CD4-positive, alpha-beta T cell (primary cell): ENCODE measurements at regions of chr17 and their contacts with region 1.

Region 1: DNA sequence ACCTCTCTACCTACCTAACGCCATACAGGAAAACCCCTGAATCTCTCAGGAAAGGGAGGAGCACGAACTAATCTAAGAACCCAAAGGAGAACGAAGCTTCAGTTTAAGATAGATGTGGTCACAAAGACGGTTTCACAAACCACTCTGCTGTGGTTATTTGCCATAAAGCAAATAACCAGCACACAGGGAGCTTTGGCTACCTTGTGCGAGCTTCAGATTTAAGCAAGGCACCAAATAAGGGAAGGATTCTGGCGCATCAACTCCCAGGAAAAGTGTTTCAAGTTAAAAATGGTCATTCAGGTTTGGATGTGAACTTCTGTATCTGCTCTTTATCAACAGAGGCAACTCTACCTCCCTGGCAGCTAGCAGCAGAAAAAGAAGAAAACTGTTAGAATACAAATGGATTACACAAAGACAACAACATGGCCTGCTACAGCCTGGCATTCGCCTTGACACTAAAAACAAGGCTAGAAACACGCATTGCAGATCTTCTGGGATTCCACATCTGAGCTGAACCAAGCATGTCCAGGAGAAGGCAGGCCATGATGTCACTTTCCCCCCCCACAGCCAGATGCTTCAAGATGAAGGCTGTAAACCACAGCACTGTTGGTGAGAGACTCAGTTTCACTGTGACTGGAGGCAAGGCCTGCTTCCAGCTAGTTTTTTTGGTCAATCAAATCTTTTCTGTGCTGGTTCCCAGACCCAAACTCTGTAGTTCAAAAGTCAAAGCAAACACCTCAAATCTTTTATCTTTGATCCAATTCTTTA is 43.6 kb downstream of the SMG6 start:
- DNase-seq: peak; percentile 17 to 84 (median 46)
- ATAC-seq: peak; percentile 55
- H3K4me3 ChIP-seq: peak overlapping the region; percentile 12
- H3K4me3 Mint-ChIP-seq: peak overlapping the region; percentile 85
- H3K27ac ChIP-seq: peak overlapping the region; percentile 63 to 76
- H3K27ac Mint-ChIP-seq: peak overlapping the region; percentile 98
- H3K4me1 ChIP-seq: peaks cover 68% of the 10 kb centered on the region
- H3K4me1 Mint-ChIP-seq: peaks cover 75% of the 10 kb centered on the region
- H3K27me3 ChIP-seq: no peaks in the 10 kb centered on the region
- H3K27me3 Mint-ChIP-seq: no peaks in the 10 kb centered on the region
- CTCF ChIP-seq: no peak

Region 2: GRCh38 chr17:2215616-2216364 is 44.2 kb before region 1 on chr17:
- CTCF ChIA-PET with region 1: no interaction called
- POLR2A ChIA-PET with region 1: interaction called, 12 read pairs
- intact Hi-C with region 1: no loop called
- DNase-seq: peak; percentile 54 to 88 (median 64)
- ATAC-seq: peak; percentile 93
- H3K4me3 ChIP-seq: peak overlapping the region; percentile 37
- H3K4me3 Mint-ChIP-seq: peak overlapping the region; percentile 68
- H3K27ac ChIP-seq: peak overlapping the region; percentile 81 to 83
- H3K27ac Mint-ChIP-seq: peak overlapping the region; percentile 95
- H3K4me1 ChIP-seq: peaks cover 44% of the 10 kb centered on the region
- H3K4me1 Mint-ChIP-seq: peaks cover 58% of the 10 kb centered on the region
- H3K27me3 ChIP-seq: no peaks in the 10 kb centered on the region
- H3K27me3 Mint-ChIP-seq: no peaks in the 10 kb centered on the region
- CTCF ChIP-seq: no peak

Region 3: DNA sequence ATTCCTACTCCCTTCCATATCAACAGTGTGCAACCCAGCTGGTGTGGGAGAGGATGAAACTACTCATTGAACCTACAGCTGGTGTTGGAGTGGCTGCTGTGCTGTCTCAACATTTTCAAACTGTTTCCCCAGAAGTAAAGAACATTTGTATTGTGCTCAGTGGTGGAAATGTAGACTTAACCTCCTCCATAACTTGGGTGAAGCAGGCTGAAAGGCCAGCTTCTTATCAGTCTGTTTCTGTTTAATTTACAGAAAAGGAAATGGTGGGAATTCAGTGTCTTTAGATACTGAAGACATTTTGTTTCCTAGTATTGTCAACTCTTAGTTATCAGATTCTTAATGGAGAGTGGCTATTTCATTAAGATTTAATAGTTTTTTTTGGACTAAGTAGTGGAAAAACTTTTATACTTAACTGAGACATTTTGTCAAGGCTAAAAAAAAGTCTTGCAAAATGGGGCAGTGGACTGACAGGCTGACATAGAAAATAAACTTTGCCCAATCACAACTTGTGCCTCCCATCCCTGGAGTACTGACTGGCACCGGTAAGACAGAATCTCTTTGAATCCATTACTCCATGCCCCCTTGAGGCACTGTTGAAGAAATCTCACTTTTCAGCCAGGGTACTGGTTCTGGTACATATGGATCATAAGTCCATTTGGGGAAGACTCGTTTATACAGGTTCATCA is 63.8 kb after region 1 on chr17:
- CTCF ChIA-PET with region 1: no interaction called
- POLR2A ChIA-PET with region 1: no interaction called
- intact Hi-C with region 1: no loop called
- DNase-seq: no peak
- ATAC-seq: no peak
- H3K4me3 ChIP-seq: no peak overlapping the region
- H3K4me3 Mint-ChIP-seq: no peak overlapping the region
- H3K27ac ChIP-seq: no peak overlapping the region
- H3K27ac Mint-ChIP-seq: no peak overlapping the region
- H3K4me1 ChIP-seq: no peaks in the 10 kb centered on the region
- H3K4me1 Mint-ChIP-seq: no peaks in the 10 kb centered on the region
- H3K27me3 ChIP-seq: no peaks in the 10 kb centered on the region
- H3K27me3 Mint-ChIP-seq: no peaks in the 10 kb centered on the region
- CTCF ChIP-seq: no peak